ENCODE measurements at regions of chr7 and their contacts with region 1.

Region 1: GRCh38 chr7:85890244-85890811 is 703.5 kb upstream of the SEMA3D start:
- DNase-seq: no peak
- ATAC-seq: no peak
- H3K4me3 ChIP-seq: no peak overlapping the region
- H3K27ac ChIP-seq: no peak overlapping the region
- H3K4me1 ChIP-seq: no peaks in the 10 kb centered on the region
- H3K27me3 ChIP-seq: no peaks in the 10 kb centered on the region
- CTCF ChIP-seq: peak; percentile 9 to 56 (median 38)
- POLR2A ChIP-seq: no peak

Region 2: GRCh38 chr7:86469680-86470295 is 579.5 kb after region 1 on chr7:
- intact Hi-C with region 1: loop called in 4 of 10 experiments (anchors 5 to 10 kb)
- DNase-seq: peak in 1 of 5 donors; percentile 7
- ATAC-seq: no peak
- H3K4me3 ChIP-seq: no peak overlapping the region
- H3K27ac ChIP-seq: no peak overlapping the region
- H3K4me1 ChIP-seq: no peaks in the 10 kb centered on the region
- H3K27me3 ChIP-seq: peaks cover 0 to 3% (median 0%) of the 10 kb centered on the region in 9 donors
- CTCF ChIP-seq: peak; percentile 25 to 56 (median 44)
- POLR2A ChIP-seq: no peak

Region 3: GRCh38 chr7:86904949-86905834 is 1014.9 kb after region 1 on chr7:
- intact Hi-C with region 1: loop called in 9 of 10 experiments (anchors 5 to 10 kb)
- DNase-seq: no peak
- ATAC-seq: no peak
- H3K4me3 ChIP-seq: no peak overlapping the region
- H3K27ac ChIP-seq: no peak overlapping the region
- H3K4me1 ChIP-seq: no peaks in the 10 kb centered on the region
- H3K27me3 ChIP-seq: no peaks in the 10 kb centered on the region
- CTCF ChIP-seq: peak in 11 of 12 donors; percentile 17 to 62 (median 43)
- POLR2A ChIP-seq: no peak